Calu3 (cell line): ENCODE measurements at regions of chr6 and their contacts with region 1.

Region 1: GRCh38 chr6:130760006-130760405 is 67.2 kb upstream of the SMLR1 start:
- DNase-seq: peak; percentile 24
- H3K4me3 Mint-ChIP-seq: no peak overlapping the region
- H3K27ac Mint-ChIP-seq: no peak overlapping the region
- H3K4me1 Mint-ChIP-seq: no peaks in the 10 kb centered on the region
- H3K27me3 Mint-ChIP-seq: peaks cover 27% of the 10 kb centered on the region
- CTCF ChIP-seq: peak; percentile 61

Region 2: DNA sequence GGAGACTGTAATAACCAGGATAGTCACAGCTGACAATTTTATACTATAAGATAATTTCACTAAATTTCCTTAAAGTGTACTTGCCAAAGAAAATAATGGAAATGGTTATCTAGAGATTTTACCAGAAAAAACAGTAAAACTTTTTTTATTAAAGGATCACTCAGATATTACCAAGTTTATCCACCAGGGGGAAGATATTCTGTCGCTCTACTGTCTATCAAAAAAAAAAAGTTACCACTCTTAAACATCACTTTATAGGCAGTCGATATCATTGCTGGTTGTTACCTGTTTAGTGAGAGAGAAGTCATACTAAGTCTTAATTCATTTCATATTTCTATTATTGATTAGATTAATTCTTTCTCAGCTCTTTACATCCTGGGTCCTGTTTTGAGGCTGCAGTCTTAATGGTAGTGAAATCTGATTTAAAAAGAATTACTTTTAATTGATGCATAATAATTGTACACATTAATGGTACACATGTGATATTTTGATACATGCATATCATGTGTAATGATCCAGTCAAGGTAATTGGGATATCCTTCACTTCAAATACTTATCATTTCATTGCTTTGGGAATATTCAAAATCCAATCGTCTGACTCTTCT is 722.7 kb before region 1 on chr6:
- CTCF ChIA-PET with region 1: no interaction called
- intact Hi-C with region 1: loop called (anchors 5 kb)
- DNase-seq: no peak
- H3K4me3 Mint-ChIP-seq: no peak overlapping the region
- H3K27ac Mint-ChIP-seq: no peak overlapping the region
- H3K4me1 Mint-ChIP-seq: no peaks in the 10 kb centered on the region
- H3K27me3 Mint-ChIP-seq: no peaks in the 10 kb centered on the region
- CTCF ChIP-seq: peak; percentile 31

Region 3: GRCh38 chr6:130293800-130294199 is 466.2 kb before region 1 on chr6:
- CTCF ChIA-PET with region 1: no interaction called
- intact Hi-C with region 1: loop called (anchors 2 kb)
- DNase-seq: peak; percentile 40
- H3K4me3 Mint-ChIP-seq: no peak overlapping the region
- H3K27ac Mint-ChIP-seq: no peak overlapping the region
- H3K4me1 Mint-ChIP-seq: no peaks in the 10 kb centered on the region
- H3K27me3 Mint-ChIP-seq: peaks cover 24% of the 10 kb centered on the region
- CTCF ChIP-seq: no peak